Sigmoid colon (tissue), 7 donors: ENCODE measurements at regions of chr3 and their contacts with region 1.

Region 1: GRCh38 chr3:48609088-48610005 is at the start of gene UQCRC1:
- DNase-seq: peak; percentile 95
- H3K4me3 ChIP-seq: peak within 1 kb of the TSS; percentile 79 to 99 (median 96)
- H3K27ac ChIP-seq: peak within 1 kb of the TSS; percentile 87 to 94 (median 93)
- H3K4me1 ChIP-seq: peaks cover 0 to 22% (median 15%) of the 10 kb centered on the region in 4 donors
- H3K27me3 ChIP-seq: no peaks in the 10 kb centered on the region
- CTCF ChIP-seq: peak; percentile 70 to 87 (median 79)
- EP300 ChIP-seq: no peak
- POLR2A ChIP-seq: peak; percentile 59 to 92
- total RNA-seq, gene UQCRC1: 199 to 241 (median 223) TPM

Region 2: DNA sequence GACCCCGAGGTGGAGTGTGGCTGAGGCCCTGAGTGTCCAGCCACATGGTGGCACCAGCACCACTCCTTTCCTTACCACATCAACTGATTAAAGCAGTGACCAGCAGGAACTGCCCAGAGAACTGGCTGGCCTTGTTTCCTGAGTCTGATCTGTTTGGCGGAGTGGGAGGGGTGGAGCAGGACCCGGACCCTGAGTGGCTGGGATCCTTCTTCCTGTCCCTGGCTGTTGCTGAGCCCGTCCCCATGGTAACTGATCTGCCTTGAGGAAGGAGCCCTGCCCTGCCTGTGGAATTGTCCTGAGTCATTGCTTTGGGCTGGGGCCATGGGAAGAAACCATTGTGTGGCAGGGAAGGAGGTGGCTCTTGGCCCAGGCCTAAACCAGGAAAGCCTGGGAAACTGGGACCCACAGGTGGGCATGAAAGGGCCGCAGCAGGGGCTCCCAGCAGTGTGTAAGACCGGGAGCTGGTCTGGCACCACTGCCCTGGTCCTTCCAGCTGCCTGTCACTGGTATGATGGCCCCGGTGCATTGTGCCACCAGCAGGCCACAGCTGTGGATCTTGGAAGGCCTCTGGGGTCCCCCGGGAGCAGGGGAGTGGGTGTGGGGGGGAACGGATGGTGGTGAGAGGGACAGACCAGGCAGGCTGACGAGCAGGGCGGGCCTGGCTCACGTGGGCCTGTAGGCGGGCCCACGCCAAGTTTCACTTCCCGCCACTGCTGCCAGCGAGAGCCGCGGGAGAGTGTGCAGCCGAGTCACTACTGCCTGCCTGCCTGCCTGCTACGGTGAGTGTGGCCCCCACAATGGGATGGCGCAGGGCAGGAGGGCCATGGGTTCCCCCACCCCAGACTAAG is 143.6 kb before region 1 on chr3:
- intact Hi-C with region 1: loop called (anchors 2 kb)
- DNase-seq: peak; percentile 100
- H3K4me3 ChIP-seq: peak overlapping the region; percentile 40 to 55 (median 50)
- H3K27ac ChIP-seq: peak overlapping the region; percentile 99 to 100 (median 99)
- H3K4me1 ChIP-seq: peaks cover 0 to 58% (median 54%) of the 10 kb centered on the region in 4 donors
- H3K27me3 ChIP-seq: no peaks in the 10 kb centered on the region
- CTCF ChIP-seq: peak in 2 of 4 experiments; percentile 63 to 66
- EP300 ChIP-seq: peak in 1 of 4 donors; percentile 61
- POLR2A ChIP-seq: peak; percentile 76 to 78

Region 3: DNA sequence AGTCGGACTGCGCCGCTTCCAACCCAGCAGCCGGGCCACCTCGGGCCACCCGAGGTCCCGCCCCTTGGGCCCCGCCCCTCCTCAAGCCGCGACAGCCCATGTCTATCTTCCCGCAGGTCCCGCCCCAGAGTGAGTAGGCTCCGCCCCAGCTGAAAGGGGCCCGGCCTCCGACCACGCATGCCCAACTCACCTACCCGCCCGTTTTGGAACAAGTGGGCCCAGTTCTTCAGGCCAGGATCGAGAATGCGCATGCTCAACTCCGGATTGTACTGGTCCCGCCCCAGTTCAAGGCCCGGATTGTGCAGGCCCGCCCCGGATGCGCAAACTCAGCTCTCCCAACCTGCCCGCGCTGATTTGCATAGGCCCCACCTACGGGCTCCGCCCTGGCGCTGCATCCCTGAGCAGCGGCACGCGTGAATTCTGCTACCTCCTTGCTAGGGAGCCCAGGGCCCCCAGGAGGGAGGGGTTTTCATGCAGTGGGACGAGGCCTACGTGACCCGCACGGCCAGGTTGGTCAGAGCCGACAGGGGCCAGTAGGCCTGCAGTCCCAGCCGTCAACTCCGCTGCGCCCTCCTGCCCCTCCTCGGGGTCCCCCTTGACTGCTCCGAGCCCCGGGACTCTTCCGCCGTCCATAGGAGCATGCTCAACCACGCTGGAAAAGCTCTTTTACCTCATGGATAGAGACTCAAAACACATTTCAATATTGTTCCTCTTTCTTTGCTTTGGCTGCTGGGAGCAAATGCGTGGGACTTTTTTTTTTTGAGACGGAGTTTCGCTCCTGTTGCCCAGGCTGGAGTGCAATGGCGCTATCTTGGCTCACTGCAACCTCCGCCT is 52.3 kb before region 1 on chr3 and contains the start of gene PFKFB4:
- intact Hi-C with region 1: loop called (anchors 2 kb)
- DNase-seq: peak; percentile 100
- H3K4me3 ChIP-seq: peak within 1 kb of the TSS; percentile 39 to 61 (median 58)
- H3K27ac ChIP-seq: peak within 1 kb of the TSS; percentile 72 to 83 (median 74)
- H3K4me1 ChIP-seq: peaks cover 0 to 52% (median 42%) of the 10 kb centered on the region in 4 donors
- H3K27me3 ChIP-seq: no peaks in the 10 kb centered on the region
- CTCF ChIP-seq: peak in 1 of 4 experiments; percentile 13
- EP300 ChIP-seq: no peak
- POLR2A ChIP-seq: no peak
- total RNA-seq, gene PFKFB4: 1.5 to 6.7 (median 2.7) TPM

Region 4: GRCh38 chr3:48567090-48567489 is 42.3 kb before region 1 on chr3:
- intact Hi-C with region 1: no loop called
- DNase-seq: no peak
- H3K4me3 ChIP-seq: no peak overlapping the region
- H3K27ac ChIP-seq: no peak overlapping the region
- H3K4me1 ChIP-seq: peaks cover 0 to 4% (median 0%) of the 10 kb centered on the region in 4 donors
- H3K27me3 ChIP-seq: no peaks in the 10 kb centered on the region
- CTCF ChIP-seq: no peak
- EP300 ChIP-seq: no peak
- POLR2A ChIP-seq: no peak

Region 5: GRCh38 chr3:48635222-48636021 is 26.1 kb after region 1 on chr3 and contains the start of gene SLC26A6:
- intact Hi-C with region 1: loop called (anchors 2 kb)
- DNase-seq: peak; percentile 98
- H3K4me3 ChIP-seq: peak within 1 kb of the TSS; percentile 73 to 86 (median 80)
- H3K27ac ChIP-seq: peak within 1 kb of the TSS; percentile 87 to 91 (median 87)
- H3K4me1 ChIP-seq: peaks cover 0 to 26% (median 21%) of the 10 kb centered on the region in 4 donors
- H3K27me3 ChIP-seq: no peaks in the 10 kb centered on the region
- CTCF ChIP-seq: peak; percentile 38 to 58 (median 43)
- EP300 ChIP-seq: no peak
- POLR2A ChIP-seq: no peak
- total RNA-seq, gene SLC26A6: 6.4 to 33.0 (median 17.0) TPM

Region 6: DNA sequence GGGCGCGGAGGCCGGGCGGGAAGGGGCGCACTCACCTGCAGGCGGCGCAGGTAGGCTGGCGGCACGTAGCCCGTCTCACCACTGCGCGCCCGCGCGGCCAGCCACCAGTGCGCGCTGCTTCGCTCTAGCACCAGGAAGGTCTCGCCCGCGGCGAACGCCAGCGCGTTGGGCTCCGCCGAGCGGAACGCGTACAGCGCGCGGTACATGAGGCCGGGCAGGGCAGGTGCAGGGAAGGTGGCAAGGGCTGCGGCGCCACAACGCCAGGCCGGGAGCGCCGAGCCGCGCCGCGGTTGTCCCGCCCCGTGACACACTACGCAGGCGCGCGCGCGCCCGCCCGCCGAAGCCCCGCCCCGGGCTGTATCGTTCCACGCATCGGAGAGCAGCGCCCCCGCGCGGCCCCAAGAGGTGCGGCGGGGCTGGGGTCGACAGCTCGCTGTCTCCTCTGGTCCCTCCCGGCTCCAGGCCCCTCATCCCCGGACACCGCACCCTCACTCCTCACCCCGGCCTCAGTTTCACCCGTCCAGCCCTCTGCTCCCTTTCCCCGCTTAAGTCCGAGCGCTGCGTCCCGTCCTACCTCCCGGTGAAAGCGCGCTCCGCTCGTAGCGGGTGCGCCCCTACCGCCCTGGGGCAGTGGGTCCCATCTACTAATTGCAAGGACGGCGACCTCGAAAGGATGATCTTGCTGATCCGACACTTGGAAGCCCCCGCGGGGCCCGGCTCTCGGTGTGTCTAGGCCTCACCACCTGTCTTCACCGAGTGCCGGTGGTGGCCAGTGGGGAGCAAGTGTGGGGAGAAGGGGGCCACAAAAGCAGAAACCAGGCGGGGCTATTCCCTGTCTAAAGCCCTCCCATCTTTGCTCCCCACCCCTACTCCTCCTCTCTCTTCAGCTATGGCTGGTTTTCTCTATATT is 76.5 kb after region 1 on chr3 and contains the start of gene NCKIPSD:
- intact Hi-C with region 1: loop called (anchors 5 kb)
- DNase-seq: peak; percentile 93
- H3K4me3 ChIP-seq: peak within 1 kb of the TSS; percentile 65 to 94 (median 80)
- H3K27ac ChIP-seq: peak within 1 kb of the TSS; percentile 77 to 85 (median 80)
- H3K4me1 ChIP-seq: peaks cover 0 to 45% (median 36%) of the 10 kb centered on the region in 4 donors
- H3K27me3 ChIP-seq: no peaks in the 10 kb centered on the region
- CTCF ChIP-seq: peak; percentile 56 to 89 (median 81)
- EP300 ChIP-seq: no peak
- POLR2A ChIP-seq: peak in 1 of 2 donors; percentile 30
- total RNA-seq, gene NCKIPSD: 7.7 to 29.3 (median 22.8) TPM